ENCODE measurements at regions of chr9 and their contacts with region 1.

Region 1: DNA sequence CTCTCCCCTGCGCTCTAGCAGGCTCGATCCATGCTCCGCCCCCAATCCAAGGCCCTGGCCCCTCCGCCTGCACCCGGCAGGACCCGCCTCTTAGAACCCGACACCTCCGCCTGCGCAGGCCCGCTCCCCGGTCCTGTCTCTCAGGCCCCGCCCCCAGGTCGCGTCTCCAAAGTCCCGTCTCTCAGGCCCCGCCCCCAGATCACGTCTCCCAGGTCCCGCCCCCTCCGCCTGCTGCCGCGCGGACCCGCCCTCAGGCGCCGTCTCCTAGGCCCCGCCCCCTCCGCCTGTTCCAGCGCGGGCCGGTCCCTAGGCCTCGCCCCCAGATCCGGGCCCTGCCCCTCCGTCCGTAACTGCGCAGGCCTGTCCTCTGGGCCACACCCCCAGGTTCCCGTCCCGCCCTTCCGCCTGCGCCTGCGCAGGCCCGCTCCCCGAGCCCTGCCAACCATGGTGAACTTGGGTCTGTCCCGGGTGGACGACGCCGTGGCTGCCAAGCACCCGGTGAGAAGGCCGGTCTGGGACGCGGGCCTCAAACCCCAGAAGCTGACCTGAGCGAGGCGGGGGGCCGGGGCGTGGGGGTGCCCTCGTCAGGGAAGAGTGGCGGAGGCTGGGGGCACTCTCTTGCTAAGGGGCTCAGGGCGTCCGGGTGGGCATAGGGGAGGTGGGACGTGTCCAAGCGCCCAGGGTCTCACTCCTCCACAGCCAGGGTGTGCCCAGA is at the start of gene TMEM141:
- DNase-seq: peak; percentile 100
- ATAC-seq: peak; percentile 93
- H3K4me3 Mint-ChIP-seq: peak within 1 kb of the TSS; percentile 82
- H3K27ac Mint-ChIP-seq: peak within 1 kb of the TSS; percentile 93
- H3K4me1 Mint-ChIP-seq: peaks cover 47% of the 10 kb centered on the region
- H3K27me3 Mint-ChIP-seq: peaks cover 4% of the 10 kb centered on the region
- total RNA-seq, gene TMEM141: 39.9 to 43.2 TPM

Region 2: GRCh38 chr9:136777359-136777758 is 13.7 kb before region 1 on chr9:
- CTCF ChIA-PET with region 1: interaction called, 14 read pairs
- POLR2A ChIA-PET with region 1: no interaction called
- DNase-seq: no peak
- ATAC-seq: no peak
- H3K4me3 Mint-ChIP-seq: no peak overlapping the region
- H3K27ac Mint-ChIP-seq: no peak overlapping the region
- H3K4me1 Mint-ChIP-seq: peaks cover 6% of the 10 kb centered on the region
- H3K27me3 Mint-ChIP-seq: peaks cover 24% of the 10 kb centered on the region

Region 3: DNA sequence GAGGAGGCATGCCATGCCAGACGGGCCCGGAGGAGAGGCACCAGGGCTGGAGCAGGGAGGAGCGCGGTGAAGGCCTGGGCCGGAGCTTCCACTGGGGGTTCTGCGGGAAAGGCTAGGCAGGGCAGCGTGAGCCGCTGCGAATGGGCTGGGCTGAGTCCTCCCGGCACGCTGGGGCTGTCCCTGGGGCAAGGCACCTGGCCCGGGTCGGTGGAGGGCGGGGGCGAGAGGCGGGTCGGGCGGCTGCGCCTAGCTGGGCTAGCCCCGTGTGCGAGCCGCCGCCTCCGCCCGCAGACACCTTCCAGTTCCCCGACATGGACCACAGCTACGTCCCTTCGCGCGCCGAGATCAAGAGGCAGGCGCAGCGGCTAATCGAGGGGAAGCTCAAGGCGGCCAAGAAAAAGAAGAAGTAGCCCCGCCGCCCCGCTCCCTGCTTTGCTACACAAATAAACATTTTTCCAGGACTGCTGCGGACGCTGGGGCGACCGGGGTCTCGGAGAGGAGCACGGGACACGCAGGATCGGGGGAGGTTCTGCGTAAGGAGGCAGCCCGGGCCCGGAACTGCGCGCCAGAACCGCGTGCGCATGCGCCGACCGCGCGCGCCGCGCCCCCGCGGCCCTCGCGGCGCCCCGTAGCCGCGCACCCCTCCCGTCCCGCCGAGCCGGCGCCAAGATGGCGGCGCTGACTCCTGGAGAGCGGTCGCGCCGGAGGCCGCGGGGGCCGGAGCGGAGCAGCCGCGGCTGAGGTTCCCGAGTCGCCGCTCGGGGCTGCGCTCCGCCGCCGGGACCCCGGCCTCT is 16.4 kb after region 1 on chr9 and contains the start of gene RABL6:
- CTCF ChIA-PET with region 1: interaction called, 29 read pairs
- POLR2A ChIA-PET with region 1: interaction called, 5 read pairs
- DNase-seq: peak; percentile 82
- ATAC-seq: peak; percentile 89
- H3K4me3 Mint-ChIP-seq: peak within 1 kb of the TSS; percentile 85
- H3K27ac Mint-ChIP-seq: peak within 1 kb of the TSS; percentile 84
- H3K4me1 Mint-ChIP-seq: peaks cover 36% of the 10 kb centered on the region
- H3K27me3 Mint-ChIP-seq: no peaks in the 10 kb centered on the region
- total RNA-seq, gene RABL6: 117 to 118 TPM

Measured in activated CD8-positive, alpha-beta T cell treated with anti-CD3 and anti-CD28 coated beads, Interleukin-2, amount 10 ng/mL, durations not matched to agents 7 days and 5 days (primary cell).